PC-3 (cell line): ENCODE measurements at regions of chr5 and their contacts with region 1.

Region 1: GRCh38 chr5:177194274-177194673 is 60.7 kb downstream of the NSD1 start:
- DNase-seq: peak; percentile 94
- ATAC-seq: peak; percentile 97
- H3K4me3 ChIP-seq: no peak overlapping the region
- H3K27ac ChIP-seq: peak overlapping the region; percentile 36; the same call in 1 of the 2 replicates
- H3K4me1 ChIP-seq: peaks cover 17% of the 10 kb centered on the region
- H3K27me3 ChIP-seq: no peaks in the 10 kb centered on the region
- CTCF ChIP-seq: no peak

Region 2: DNA sequence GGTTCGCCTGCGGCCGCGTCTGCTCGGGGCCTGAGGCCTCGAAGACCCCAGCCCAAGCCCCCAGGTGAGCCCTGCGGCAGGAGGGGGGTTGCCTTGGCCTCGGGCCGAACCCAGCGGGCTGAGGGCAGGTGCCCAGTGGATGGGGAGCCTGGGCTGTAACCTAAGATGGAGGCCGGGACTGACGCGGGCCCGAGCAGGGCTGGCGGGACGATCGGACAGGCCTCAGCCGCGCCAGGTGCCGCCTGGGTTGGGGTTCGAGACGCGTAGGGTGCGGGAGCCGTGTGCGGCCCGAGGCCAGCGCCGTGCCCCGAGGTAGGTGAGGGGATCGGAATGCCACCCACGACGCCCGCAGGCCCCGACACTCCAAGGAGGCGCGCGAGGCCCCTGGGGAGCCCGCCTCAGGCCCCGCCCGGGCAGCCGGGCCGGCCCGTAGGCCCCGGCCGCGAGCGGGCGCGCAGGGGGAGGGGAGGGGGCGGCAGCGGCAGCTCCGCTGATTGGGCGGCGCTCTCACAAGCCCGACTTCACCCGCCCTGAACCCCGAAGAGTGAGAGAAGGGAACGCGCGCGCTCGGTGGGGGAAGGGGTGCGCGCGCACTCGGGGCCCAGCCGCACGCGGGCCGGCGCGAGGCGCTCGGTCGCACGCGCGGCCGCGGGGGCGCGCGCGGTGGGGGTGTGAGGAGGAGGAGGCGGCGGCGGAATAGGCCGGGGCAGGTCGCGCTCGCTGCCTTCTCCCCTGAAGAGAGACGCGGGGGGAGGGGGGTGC is 61.0 kb before region 1 on chr5 and contains the start of gene NSD1:
- CTCF ChIA-PET with region 1: no interaction called
- POLR2A ChIA-PET with region 1: interaction called, 46 read pairs
- intact Hi-C with region 1: no loop called
- DNase-seq: peak; percentile 75
- ATAC-seq: peak; percentile 60
- H3K4me3 ChIP-seq: peak within 1 kb of the TSS; percentile 79
- H3K27ac ChIP-seq: peak within 1 kb of the TSS; percentile 35
- H3K4me1 ChIP-seq: peaks cover 31% of the 10 kb centered on the region
- H3K27me3 ChIP-seq: no peaks in the 10 kb centered on the region
- CTCF ChIP-seq: no peak
- total RNA-seq, gene NSD1: 48.9 and 70.5 TPM in 2 replicates

Region 3: DNA sequence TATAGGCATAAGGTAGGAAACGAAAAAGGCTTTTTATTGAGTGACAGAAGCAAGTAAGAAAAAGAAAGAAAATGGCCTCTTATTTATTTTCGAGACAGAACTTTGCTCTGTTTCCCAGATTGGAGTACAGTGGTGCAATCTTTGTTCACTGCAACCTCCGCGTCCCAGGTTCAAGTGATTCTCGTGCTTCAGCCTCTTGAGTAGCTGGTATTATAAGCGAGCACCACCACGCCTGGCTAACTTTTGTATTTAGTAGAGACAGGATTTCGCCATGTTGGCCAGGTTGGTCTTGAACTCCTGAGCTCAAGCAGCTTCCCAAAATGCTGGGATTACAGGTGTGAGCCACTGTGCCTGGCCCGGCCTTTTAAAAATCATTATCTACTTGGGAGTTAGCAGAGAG is 10.0 kb after region 1 on chr5:
- CTCF ChIA-PET with region 1: no interaction called
- POLR2A ChIA-PET with region 1: interaction called, 15 read pairs
- intact Hi-C with region 1: no loop called
- DNase-seq: no peak
- ATAC-seq: no peak
- H3K4me3 ChIP-seq: no peak overlapping the region
- H3K27ac ChIP-seq: no peak overlapping the region
- H3K4me1 ChIP-seq: no peaks in the 10 kb centered on the region
- H3K27me3 ChIP-seq: no peaks in the 10 kb centered on the region
- CTCF ChIP-seq: no peak

Region 4: DNA sequence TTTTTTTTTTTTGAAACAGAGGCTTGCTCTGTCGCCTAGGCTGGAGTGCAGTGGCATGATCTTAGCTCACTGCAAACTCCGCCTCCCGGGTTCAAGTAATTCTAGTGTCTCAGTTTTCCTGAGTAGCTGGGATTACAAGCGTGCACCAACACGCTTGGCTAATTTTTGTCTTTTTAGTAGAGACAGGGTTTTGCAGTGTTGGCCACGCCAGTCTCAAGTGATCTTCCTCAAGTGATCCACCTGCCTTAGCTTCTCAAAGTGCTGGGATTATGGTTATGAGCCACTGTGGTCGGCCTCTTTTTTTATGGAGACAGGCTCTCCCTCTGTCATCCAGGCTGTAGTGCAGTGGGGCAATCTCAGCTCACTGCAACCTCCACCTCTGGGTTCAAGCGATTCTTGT is 26.3 kb after region 1 on chr5:
- CTCF ChIA-PET with region 1: no interaction called
- POLR2A ChIA-PET with region 1: interaction called, 36 read pairs
- intact Hi-C with region 1: no loop called
- DNase-seq: no peak
- ATAC-seq: no peak
- H3K4me3 ChIP-seq: no peak overlapping the region
- H3K27ac ChIP-seq: no peak overlapping the region
- H3K4me1 ChIP-seq: no peaks in the 10 kb centered on the region
- H3K27me3 ChIP-seq: no peaks in the 10 kb centered on the region
- CTCF ChIP-seq: no peak

Region 5: GRCh38 chr5:177473461-177474001 is 279.3 kb after region 1 on chr5 and contains the start of gene DBN1:
- CTCF ChIA-PET with region 1: no interaction called
- POLR2A ChIA-PET with region 1: no interaction called
- intact Hi-C with region 1: no loop called
- DNase-seq: peak; percentile 61
- ATAC-seq: peak; percentile 69
- H3K4me3 ChIP-seq: peak within 1 kb of the TSS; percentile 90
- H3K27ac ChIP-seq: no peak within 1 kb of the TSS
- H3K4me1 ChIP-seq: peaks cover 21% of the 10 kb centered on the region
- H3K27me3 ChIP-seq: no peaks in the 10 kb centered on the region
- CTCF ChIP-seq: no peak
- total RNA-seq, gene DBN1: 127 and 207 TPM in 2 replicates